SK-N-SH (cell line): ENCODE measurements at regions of chr14 and their contacts with region 1.

Region 1: DNA sequence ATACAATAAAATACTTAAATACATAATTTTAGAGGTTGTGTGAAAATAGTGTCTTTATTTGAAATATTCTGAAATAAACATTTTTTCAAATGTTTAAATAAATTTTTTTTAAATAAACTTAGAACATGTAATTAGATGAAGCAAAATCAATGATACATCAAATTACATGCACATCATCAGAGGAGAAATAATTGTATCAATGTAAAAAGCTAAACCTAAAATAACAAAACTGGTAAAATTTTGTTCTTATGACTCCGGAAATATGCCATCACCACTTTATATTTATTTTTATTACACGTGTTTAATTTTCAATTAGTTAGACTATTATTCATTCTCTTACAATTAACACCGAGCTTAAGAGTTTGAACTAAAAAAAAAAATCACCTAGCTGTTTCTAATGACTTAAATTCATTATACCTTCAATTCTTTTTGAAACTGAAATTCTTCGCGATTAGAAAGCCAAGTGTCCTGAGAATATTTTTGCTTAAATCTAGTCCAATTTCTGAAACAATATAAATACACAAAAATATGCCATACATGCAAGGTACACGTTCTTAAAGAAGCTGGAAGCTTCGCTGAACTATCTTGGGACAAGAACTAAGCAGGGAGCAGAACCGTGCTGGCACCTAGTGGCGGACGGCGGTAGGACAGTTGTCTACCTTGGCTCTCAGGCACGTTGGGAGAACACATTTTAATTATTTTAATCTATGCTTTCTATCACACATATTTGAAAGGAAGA is 230.5 kb downstream of the SLC25A21 start:
- DNase-seq: peak; percentile 2
- H3K4me3 ChIP-seq: peak overlapping the region in 1 of 2 experiments; percentile 43; a peak in 1 of 4 replicates
- H3K27ac ChIP-seq: no peak overlapping the region
- H3K4me1 ChIP-seq: no peaks in the 10 kb centered on the region
- H3K27me3 ChIP-seq: no peaks in the 10 kb centered on the region; the same call in 1 of the 2 replicates
- CTCF ChIP-seq: peak; percentile 69
- EP300 ChIP-seq: no peak
- RAD21 ChIP-seq: peak; percentile 62

Region 2: GRCh38 chr14:36931796-36932195 is 10.2 kb before region 1 on chr14:
- CTCF ChIA-PET with region 1: interaction called, 11 read pairs
- POLR2A ChIA-PET with region 1: no interaction called
- DNase-seq: no peak
- H3K4me3 ChIP-seq: no peak overlapping the region
- H3K27ac ChIP-seq: no peak overlapping the region
- H3K4me1 ChIP-seq: no peaks in the 10 kb centered on the region
- H3K27me3 ChIP-seq: no peaks in the 10 kb centered on the region
- CTCF ChIP-seq: no peak
- EP300 ChIP-seq: no peak
- RAD21 ChIP-seq: no peak